ENCODE measurements at regions of chr16 and their contacts with region 1.

Region 1: DNA sequence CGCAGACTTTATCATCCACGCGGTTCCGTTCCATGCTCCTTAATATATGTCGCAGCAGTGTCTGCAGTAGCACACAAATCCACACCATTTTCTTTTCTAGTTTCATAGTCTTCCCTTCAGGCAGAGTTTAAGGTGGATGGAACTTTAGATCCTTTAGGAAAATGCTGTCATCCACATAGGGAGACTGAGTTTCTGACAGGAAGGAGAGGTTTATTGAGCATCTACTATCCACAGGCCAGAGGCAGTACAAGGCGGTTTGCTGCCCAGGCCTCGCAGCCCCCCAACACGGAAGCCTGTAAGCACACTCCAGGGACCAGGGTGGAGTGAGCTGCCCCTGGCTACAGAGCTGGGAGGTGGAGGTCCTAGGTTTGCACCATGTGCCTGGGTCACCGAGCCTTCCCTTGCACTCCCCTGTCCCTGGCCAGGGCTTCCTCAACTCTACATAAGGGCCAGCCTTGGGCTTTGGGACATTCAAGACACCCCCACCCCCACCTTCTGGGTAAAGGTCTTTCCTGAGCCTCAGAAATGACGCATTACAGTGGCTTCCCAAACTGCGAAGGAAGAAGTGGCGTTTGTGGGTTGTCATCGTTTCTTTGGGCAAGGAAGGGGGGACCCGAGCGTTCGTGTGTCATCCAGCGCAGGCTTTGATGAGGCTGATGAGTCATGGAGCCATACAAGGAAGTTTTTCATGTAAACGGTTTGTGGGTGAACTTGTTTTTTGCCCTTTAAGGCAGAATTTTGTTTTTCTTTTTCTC is 146.5 kb upstream of the PLCG2 start:
- DNase-seq: peak; percentile 51 to 92 (median 75)
- ATAC-seq: peak; percentile 89
- H3K4me3 ChIP-seq: no peak overlapping the region
- H3K4me3 Mint-ChIP-seq: peak overlapping the region; percentile 3
- H3K27ac ChIP-seq: peak overlapping the region; percentile 44 to 80
- H3K27ac Mint-ChIP-seq: peak overlapping the region; percentile 94
- H3K4me1 ChIP-seq: peaks cover 29% of the 10 kb centered on the region
- H3K4me1 Mint-ChIP-seq: peaks cover 59% of the 10 kb centered on the region
- H3K27me3 ChIP-seq: no peaks in the 10 kb centered on the region
- H3K27me3 Mint-ChIP-seq: no peaks in the 10 kb centered on the region
- CTCF ChIP-seq: no peak

Region 2: GRCh38 chr16:81585785-81586184 is 46.8 kb before region 1 on chr16:
- CTCF ChIA-PET with region 1: no interaction called
- POLR2A ChIA-PET with region 1: no interaction called
- intact Hi-C with region 1: no loop called
- DNase-seq: no peak
- ATAC-seq: no peak
- H3K4me3 ChIP-seq: no peak overlapping the region
- H3K4me3 Mint-ChIP-seq: no peak overlapping the region
- H3K27ac ChIP-seq: no peak overlapping the region
- H3K27ac Mint-ChIP-seq: peak overlapping the region; percentile 43
- H3K4me1 ChIP-seq: no peaks in the 10 kb centered on the region
- H3K4me1 Mint-ChIP-seq: peaks cover 17% of the 10 kb centered on the region
- H3K27me3 ChIP-seq: no peaks in the 10 kb centered on the region
- H3K27me3 Mint-ChIP-seq: no peaks in the 10 kb centered on the region
- CTCF ChIP-seq: no peak

Region 3: GRCh38 chr16:81616321-81617055 is 16.1 kb before region 1 on chr16:
- CTCF ChIA-PET with region 1: interaction called, 3 read pairs
- POLR2A ChIA-PET with region 1: interaction called, 7 read pairs
- intact Hi-C with region 1: loop called in 1 of 2 experiments (anchors 1 kb)
- DNase-seq: peak; percentile 59 to 90 (median 74)
- ATAC-seq: peak; percentile 94
- H3K4me3 ChIP-seq: peak overlapping the region; percentile 32
- H3K4me3 Mint-ChIP-seq: peak overlapping the region; percentile 72
- H3K27ac ChIP-seq: peak overlapping the region; percentile 70 to 87
- H3K27ac Mint-ChIP-seq: no peak overlapping the region
- H3K4me1 ChIP-seq: peaks cover 28% of the 10 kb centered on the region
- H3K4me1 Mint-ChIP-seq: no peaks in the 10 kb centered on the region
- H3K27me3 ChIP-seq: no peaks in the 10 kb centered on the region
- H3K27me3 Mint-ChIP-seq: no peaks in the 10 kb centered on the region
- CTCF ChIP-seq: no peak

Region 4: GRCh38 chr16:81645266-81645694 is 12.7 kb after region 1 on chr16:
- CTCF ChIA-PET with region 1: no interaction called
- POLR2A ChIA-PET with region 1: no interaction called
- intact Hi-C with region 1: no loop called
- DNase-seq: no peak
- ATAC-seq: no peak
- H3K4me3 ChIP-seq: no peak overlapping the region
- H3K4me3 Mint-ChIP-seq: no peak overlapping the region
- H3K27ac ChIP-seq: no peak overlapping the region
- H3K27ac Mint-ChIP-seq: no peak overlapping the region
- H3K4me1 ChIP-seq: peaks cover 3% of the 10 kb centered on the region
- H3K4me1 Mint-ChIP-seq: peaks cover 18% of the 10 kb centered on the region
- H3K27me3 ChIP-seq: no peaks in the 10 kb centered on the region
- H3K27me3 Mint-ChIP-seq: no peaks in the 10 kb centered on the region
- CTCF ChIP-seq: no peak

Region 5: DNA sequence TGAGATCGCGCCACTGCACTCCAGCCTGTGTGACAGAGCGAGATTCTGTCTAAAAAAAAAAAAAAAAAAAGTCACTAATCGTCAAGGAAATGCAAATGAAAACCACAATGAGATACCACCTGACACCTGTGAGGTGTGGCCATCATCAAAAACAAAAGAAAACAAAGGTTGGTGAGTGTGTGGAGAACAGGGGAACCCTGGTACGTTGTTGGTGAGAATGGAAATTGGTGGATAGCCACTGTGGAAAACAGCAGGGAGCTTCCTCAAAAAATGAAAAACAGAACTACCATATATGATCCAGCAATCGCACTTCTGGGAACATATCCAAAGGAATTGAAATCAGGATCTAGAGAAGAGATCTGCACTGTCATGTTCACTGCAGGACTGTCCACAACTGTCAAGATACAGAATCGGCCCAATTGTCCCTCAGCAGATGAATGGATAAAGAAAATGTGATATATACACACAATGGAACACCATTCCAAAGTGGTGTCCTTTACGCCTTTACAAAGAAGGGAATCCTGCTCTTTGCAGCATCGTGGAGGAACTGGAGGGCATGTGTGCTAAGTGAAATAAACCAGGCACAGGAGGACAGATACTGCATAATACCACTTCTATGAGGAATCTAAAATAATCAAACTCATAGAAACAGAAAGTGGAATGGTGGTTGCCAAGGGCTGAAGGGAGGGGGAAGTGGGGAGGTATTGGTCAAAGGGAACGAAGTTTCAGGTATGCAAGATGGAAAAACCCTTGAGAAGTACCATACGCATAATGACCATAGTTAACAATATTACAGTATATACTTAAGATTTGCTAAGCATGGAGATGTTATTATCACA is 83.0 kb after region 1 on chr16:
- CTCF ChIA-PET with region 1: no interaction called
- POLR2A ChIA-PET with region 1: no interaction called
- intact Hi-C with region 1: loop called in 1 of 2 experiments (anchors 5 kb)
- DNase-seq: peak in 7 of 14 experiments; percentile 14 to 87 (median 36)
- ATAC-seq: peak; percentile 67
- H3K4me3 ChIP-seq: peak overlapping the region; percentile 31
- H3K4me3 Mint-ChIP-seq: peak overlapping the region; percentile 51
- H3K27ac ChIP-seq: peak overlapping the region in 1 of 2 donors; percentile 18
- H3K27ac Mint-ChIP-seq: peak overlapping the region; percentile 83
- H3K4me1 ChIP-seq: peaks cover 54% of the 10 kb centered on the region
- H3K4me1 Mint-ChIP-seq: peaks cover 51% of the 10 kb centered on the region
- H3K27me3 ChIP-seq: no peaks in the 10 kb centered on the region
- H3K27me3 Mint-ChIP-seq: no peaks in the 10 kb centered on the region
- CTCF ChIP-seq: no peak

Region 6: GRCh38 chr16:81863630-81864352 is 231.2 kb after region 1 on chr16:
- CTCF ChIA-PET with region 1: no interaction called
- POLR2A ChIA-PET with region 1: no interaction called
- intact Hi-C with region 1: no loop called
- DNase-seq: no peak
- ATAC-seq: no peak
- H3K4me3 ChIP-seq: no peak overlapping the region
- H3K4me3 Mint-ChIP-seq: no peak overlapping the region
- H3K27ac ChIP-seq: no peak overlapping the region
- H3K27ac Mint-ChIP-seq: no peak overlapping the region
- H3K4me1 ChIP-seq: no peaks in the 10 kb centered on the region
- H3K4me1 Mint-ChIP-seq: no peaks in the 10 kb centered on the region
- H3K27me3 ChIP-seq: no peaks in the 10 kb centered on the region
- H3K27me3 Mint-ChIP-seq: no peaks in the 10 kb centered on the region
- CTCF ChIP-seq: no peak

Measured in CD4-positive, alpha-beta T cell (primary cell).